Sciatic nerve (tissue), 2 donors: ENCODE measurements at regions of chr4 and their contacts with region 1.

Region 1: DNA sequence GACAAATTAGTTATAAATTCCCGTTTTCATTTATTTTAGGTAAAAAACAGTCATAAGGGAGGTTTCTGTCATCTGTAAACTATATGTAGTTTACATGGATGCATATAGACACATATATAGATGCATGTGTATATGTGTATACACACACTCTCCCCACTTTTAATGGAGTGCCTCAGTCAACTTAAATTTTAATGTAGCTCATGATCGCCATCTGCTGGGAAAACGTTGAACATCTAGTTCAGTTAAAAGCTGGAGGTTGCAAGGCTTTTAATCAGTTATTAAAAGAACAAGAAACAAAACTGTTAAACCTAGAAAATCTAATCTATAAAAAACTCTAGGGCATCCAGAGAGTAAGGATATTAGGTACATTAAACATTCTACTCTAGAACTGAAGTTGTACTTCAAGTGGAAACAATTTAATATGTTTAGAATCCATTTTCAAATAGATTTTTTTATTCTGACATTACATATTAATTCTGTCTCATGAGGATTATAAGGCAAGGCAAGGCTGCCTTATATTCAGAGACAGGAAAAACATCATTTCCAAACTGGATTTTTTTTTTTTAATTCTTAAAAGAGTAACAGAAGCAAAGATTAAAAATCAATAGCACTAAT is 122.6 kb downstream of the SHISA3 start:
- DNase-seq: peak; percentile 65
- ATAC-seq: peak; percentile 75

Region 2: DNA sequence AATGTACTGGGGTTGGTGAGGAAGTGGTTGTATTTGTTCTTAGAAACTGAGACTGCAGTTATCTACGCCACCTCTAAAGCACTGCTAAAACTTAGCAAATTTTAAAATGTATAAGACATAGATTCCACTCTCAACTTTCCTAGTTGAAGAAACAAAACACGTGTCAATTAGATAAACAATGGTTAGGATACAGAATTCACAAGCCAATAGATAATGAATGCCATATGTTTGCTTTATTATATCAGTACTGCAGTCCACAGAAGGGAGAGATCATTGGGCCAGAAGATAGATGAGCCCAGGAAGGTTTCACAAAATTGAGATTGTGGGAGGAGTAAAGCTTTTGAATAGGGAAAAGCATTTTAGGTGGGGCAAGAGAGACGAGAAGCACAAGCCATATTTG is 570.4 kb before region 1 on chr4:
- intact Hi-C with region 1: loop called (anchors 5 kb)
- DNase-seq: no peak
- ATAC-seq: no peak

Region 3: GRCh38 chr4:42278709-42279323 is 241.1 kb before region 1 on chr4:
- intact Hi-C with region 1: loop called (anchors 10 kb)
- DNase-seq: no peak
- ATAC-seq: no peak

Region 4: DNA sequence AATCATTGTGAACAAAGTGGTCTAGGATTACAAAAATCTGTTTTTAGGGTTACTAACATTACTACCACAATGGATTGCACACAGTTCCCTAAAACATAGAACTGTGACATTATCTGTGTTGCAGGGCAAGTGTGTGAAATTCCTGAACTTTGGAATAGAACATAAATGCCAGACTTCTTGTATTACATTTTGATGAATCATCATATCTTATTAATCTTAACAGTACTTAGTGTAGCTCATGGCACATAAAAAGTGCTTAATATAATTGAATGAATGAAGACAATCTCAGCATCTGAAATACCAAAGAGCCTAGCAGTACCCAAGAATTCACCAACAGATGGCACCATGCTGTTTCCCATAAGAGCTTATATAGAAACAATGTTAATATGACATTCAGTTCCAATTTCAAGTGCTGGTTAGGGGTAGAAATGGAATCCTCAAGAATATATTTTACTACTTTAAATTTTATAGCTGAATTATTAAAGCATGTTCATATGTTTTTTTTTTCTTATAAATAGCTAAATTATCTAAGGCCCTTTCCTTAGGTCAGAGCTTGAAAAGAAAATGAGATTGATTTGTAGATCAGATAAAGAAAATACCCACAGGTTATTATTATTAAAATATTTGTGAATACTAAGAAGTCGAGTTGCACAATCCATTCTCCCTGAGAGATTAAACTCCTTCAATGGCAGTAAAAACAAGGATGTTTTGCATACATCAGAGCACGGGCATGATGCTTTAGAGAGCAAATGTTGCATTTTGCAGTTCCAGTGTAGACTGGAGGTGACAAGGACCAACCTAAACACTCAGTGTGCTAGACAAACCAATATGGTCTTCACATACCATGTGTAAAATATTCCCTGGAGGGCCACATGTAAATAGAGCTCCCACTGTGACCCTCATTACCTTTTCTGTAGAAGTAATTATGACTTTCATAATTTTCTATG is 148.3 kb before region 1 on chr4:
- intact Hi-C with region 1: loop called (anchors 10 kb)
- DNase-seq: no peak
- ATAC-seq: peak; percentile 75